Endothelial cell of umbilical vein (primary cell): ENCODE measurements at regions of chr3 and their contacts with region 1.

Region 1: DNA sequence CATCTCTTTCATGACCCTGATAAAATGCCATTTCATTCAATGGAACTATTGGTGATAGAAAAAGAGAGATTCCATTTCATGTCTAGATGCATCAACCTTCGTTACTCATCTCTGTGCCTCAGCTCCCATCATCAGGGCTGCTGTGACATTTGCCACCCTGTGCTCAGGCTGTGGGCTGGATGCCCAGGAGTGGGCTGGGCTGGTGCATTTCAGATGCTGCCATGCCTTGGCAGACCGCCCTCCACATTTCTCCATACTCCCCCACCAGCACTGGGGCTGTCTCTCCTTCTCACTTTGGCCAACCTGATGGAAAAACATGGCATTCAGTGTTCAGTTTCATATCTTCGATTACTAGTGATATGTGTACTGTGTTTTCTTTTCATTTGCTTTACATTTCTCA is 59.1 kb downstream of the DNASE1L3 start:
- DNase-seq: no peak
- H3K4me3 ChIP-seq: no peak overlapping the region
- H3K27ac ChIP-seq: no peak overlapping the region
- H3K4me1 ChIP-seq: no peaks in the 10 kb centered on the region
- H3K27me3 ChIP-seq: no peaks in the 10 kb centered on the region
- CTCF ChIP-seq: no peak
- POLR2A ChIP-seq: peak; percentile 13

Region 2: GRCh38 chr3:58093573-58094195 is 58.0 kb before region 1 on chr3:
- CTCF ChIA-PET with region 1: no interaction called
- POLR2A ChIA-PET with region 1: no interaction called
- dilution Hi-C with region 1: loop called (anchors 10 kb)
- intact Hi-C with region 1: no loop called
- DNase-seq: peak; percentile 49
- H3K4me3 ChIP-seq: no peak overlapping the region
- H3K27ac ChIP-seq: peak overlapping the region; percentile 35
- H3K4me1 ChIP-seq: peaks cover 6% of the 10 kb centered on the region
- H3K27me3 ChIP-seq: no peaks in the 10 kb centered on the region
- CTCF ChIP-seq: no peak
- POLR2A ChIP-seq: no peak